PC-3 (cell line): ENCODE measurements at regions of chr1 and their contacts with region 1.

Region 1: GRCh38 chr1:67832737-67833601 is at the start of gene GNG12:
- DNase-seq: peak; percentile 79
- ATAC-seq: peak; percentile 72
- H3K4me3 ChIP-seq: peak within 1 kb of the TSS; percentile 84
- H3K27ac ChIP-seq: peak within 1 kb of the TSS; percentile 81
- H3K4me1 ChIP-seq: peaks cover 21% of the 10 kb centered on the region
- H3K27me3 ChIP-seq: no peaks in the 10 kb centered on the region
- CTCF ChIP-seq: no peak
- total RNA-seq, gene GNG12: 54.1 and 66.1 TPM in 2 replicates

Region 2: DNA sequence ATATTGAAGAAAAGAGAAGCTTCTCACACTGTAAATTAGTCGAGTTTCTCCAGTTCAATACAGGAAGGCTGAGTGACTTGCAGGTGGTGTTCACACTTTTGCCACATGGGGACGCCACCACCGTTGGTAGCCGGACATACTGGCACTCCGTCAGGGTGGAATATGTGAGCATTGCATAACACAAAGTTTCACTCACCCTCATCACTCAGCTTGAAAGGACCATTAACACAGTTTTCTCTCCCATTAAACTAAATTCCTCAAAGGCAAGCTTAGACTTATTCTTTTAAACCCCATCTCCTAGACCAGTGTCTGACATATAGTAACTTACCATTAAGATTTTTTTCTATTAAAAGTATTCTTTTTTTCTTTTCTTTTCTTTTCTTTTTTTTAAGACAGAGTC is 297.5 kb before region 1 on chr1:
- CTCF ChIA-PET with region 1: interaction called, 8 read pairs
- POLR2A ChIA-PET with region 1: no interaction called
- intact Hi-C with region 1: loop called (anchors 5 kb)
- DNase-seq: peak; percentile 87
- ATAC-seq: peak; percentile 83
- H3K4me3 ChIP-seq: no peak overlapping the region
- H3K27ac ChIP-seq: no peak overlapping the region
- H3K4me1 ChIP-seq: peaks cover 15% of the 10 kb centered on the region
- H3K27me3 ChIP-seq: no peaks in the 10 kb centered on the region
- CTCF ChIP-seq: peak; percentile 98

Region 3: DNA sequence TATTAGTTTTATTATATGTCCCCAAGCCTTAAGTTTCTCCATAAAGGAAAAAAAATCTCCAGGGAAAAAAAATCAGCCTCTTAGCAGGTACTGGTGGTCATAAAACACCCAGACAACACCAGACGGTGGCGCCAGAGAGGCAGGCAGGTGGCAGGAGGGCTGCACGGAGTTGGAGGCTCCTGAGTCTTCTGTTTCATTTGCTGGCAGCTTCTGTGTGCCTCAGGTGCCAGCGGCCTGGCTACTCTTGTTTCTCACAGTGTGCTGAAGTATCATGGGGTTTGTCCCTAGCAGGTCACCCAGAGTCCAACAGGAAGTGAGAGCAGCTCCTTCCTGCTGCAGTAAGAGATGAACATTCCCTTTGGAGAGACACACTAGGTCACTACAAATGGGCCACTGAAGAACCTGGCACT is 271.3 kb before region 1 on chr1:
- CTCF ChIA-PET with region 1: no interaction called
- POLR2A ChIA-PET with region 1: no interaction called
- intact Hi-C with region 1: loop called (anchors 5 kb)
- DNase-seq: peak; percentile 92
- ATAC-seq: peak; percentile 90
- H3K4me3 ChIP-seq: no peak overlapping the region
- H3K27ac ChIP-seq: 0 out of 2 replicates have a peak overlapping the region, but pooled peaks have one; percentile 7
- H3K4me1 ChIP-seq: peaks cover 18% of the 10 kb centered on the region
- H3K27me3 ChIP-seq: no peaks in the 10 kb centered on the region
- CTCF ChIP-seq: peak; percentile 93

Region 4: DNA sequence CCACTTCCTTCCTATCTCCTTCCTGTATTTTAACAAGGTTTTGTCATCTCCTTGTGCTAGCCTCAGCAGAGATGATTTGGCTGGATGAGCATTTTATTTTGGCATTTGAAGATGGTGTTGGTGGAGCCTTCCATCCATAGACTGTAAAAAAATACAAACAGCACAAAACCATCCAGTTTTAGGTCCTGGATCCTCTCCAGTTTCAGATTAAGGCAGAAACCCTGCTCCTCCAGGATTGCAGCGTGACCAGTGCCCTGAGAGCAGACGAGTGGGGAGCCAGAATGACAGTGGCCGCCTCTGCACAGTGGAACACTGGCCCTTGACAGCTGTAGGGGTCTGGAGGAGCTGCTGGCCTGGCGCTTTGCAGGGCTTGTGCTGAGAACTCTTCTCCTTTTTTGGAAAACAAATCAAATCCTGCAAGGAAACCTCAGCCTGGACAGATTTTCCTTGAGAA is 220.2 kb before region 1 on chr1:
- CTCF ChIA-PET with region 1: no interaction called
- POLR2A ChIA-PET with region 1: interaction called, 10 read pairs
- intact Hi-C with region 1: no loop called
- DNase-seq: peak; percentile 35
- ATAC-seq: peak; percentile 76
- H3K4me3 ChIP-seq: no peak overlapping the region
- H3K27ac ChIP-seq: peak overlapping the region; percentile 23
- H3K4me1 ChIP-seq: peaks cover 23% of the 10 kb centered on the region
- H3K27me3 ChIP-seq: no peaks in the 10 kb centered on the region
- CTCF ChIP-seq: no peak

Region 5: GRCh38 chr1:67766141-67766978 is 66.6 kb before region 1 on chr1:
- CTCF ChIA-PET with region 1: interaction called, 13 read pairs
- POLR2A ChIA-PET with region 1: interaction called, 7 read pairs
- intact Hi-C with region 1: loop called (anchors 1 kb)
- DNase-seq: peak; percentile 62
- ATAC-seq: peak; percentile 59
- H3K4me3 ChIP-seq: peak overlapping the region; percentile 54
- H3K27ac ChIP-seq: peak overlapping the region; percentile 33
- H3K4me1 ChIP-seq: peaks cover 34% of the 10 kb centered on the region
- H3K27me3 ChIP-seq: no peaks in the 10 kb centered on the region
- CTCF ChIP-seq: peak; percentile 92

Region 6: DNA sequence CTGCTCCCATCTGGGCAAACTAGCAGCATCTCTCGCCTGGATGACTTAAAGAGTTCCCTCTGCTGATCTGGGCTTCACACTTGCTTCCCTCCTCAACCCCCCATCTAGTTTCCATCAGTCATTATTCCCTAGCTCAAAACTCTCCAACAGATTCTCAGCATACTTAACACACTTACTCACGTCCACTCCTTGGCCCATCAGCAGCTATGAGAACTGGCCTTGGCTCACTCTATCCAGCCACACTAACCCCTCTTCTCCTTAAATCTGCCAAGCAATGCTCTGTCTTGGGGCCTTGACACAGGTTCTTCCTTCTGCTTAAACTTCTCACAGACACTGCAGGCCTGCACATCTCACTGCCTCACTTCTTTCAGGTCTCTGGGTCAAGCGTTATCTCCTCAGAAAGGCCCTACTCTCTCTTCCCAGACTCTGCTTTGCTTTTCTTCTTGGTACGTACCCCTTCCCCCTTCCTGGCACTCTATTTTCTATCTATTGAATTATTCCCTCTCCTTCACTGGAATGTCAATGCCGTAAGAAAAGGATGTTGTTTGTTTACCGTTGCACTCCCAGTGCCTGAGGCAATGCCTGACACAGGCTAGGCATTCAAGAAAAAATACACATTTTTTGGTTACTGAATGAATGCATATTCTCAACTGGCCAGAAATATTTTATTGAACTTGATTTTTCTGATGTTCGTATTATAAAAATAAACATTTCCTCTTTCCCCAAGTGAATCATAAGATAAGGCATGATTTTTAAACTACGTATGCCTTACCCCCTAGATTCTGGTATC is 41.1 kb before region 1 on chr1:
- CTCF ChIA-PET with region 1: no interaction called
- POLR2A ChIA-PET with region 1: interaction called, 3 read pairs
- intact Hi-C with region 1: loop called (anchors 2 kb)
- DNase-seq: peak; percentile 86
- ATAC-seq: peak; percentile 72
- H3K4me3 ChIP-seq: peak overlapping the region; percentile 44
- H3K27ac ChIP-seq: peak overlapping the region; percentile 76
- H3K4me1 ChIP-seq: peaks cover 40% of the 10 kb centered on the region
- H3K27me3 ChIP-seq: no peaks in the 10 kb centered on the region
- CTCF ChIP-seq: no peak

Region 7: GRCh38 chr1:68384321-68384813 is 551.4 kb after region 1 on chr1:
- CTCF ChIA-PET with region 1: no interaction called
- POLR2A ChIA-PET with region 1: no interaction called
- intact Hi-C with region 1: loop called (anchors 5 kb)
- DNase-seq: peak; percentile 98
- ATAC-seq: peak; percentile 76
- H3K4me3 ChIP-seq: peak overlapping the region; percentile 60
- H3K27ac ChIP-seq: peak overlapping the region; percentile 100
- H3K4me1 ChIP-seq: peaks cover 40% of the 10 kb centered on the region
- H3K27me3 ChIP-seq: no peaks in the 10 kb centered on the region
- CTCF ChIP-seq: peak; percentile 68